ENCODE measurements at regions of chr1 and their contacts with region 1.

Region 1: GRCh38 chr1:145891587-145892485 is 6.2 kb upstream of the ANKRD35 start:
- DNase-seq: peak; percentile 74
- ATAC-seq: peak; percentile 78
- H3K4me3 Mint-ChIP-seq: no peak overlapping the region
- H3K27ac Mint-ChIP-seq: no peak overlapping the region
- H3K4me1 Mint-ChIP-seq: no peaks in the 10 kb centered on the region
- H3K27me3 Mint-ChIP-seq: no peaks in the 10 kb centered on the region

Region 2: GRCh38 chr1:145730900-145731299 is 160.9 kb before region 1 on chr1:
- CTCF ChIA-PET with region 1: no interaction called
- POLR2A ChIA-PET with region 1: no interaction called
- intact Hi-C with region 1: no loop called
- DNase-seq: no peak
- ATAC-seq: no peak
- H3K4me3 Mint-ChIP-seq: no peak overlapping the region
- H3K27ac Mint-ChIP-seq: no peak overlapping the region
- H3K4me1 Mint-ChIP-seq: no peaks in the 10 kb centered on the region
- H3K27me3 Mint-ChIP-seq: no peaks in the 10 kb centered on the region

Region 3: GRCh38 chr1:145751491-145752037 is 140.3 kb before region 1 on chr1:
- CTCF ChIA-PET with region 1: no interaction called
- POLR2A ChIA-PET with region 1: no interaction called
- intact Hi-C with region 1: no loop called
- DNase-seq: no peak
- ATAC-seq: no peak
- H3K4me3 Mint-ChIP-seq: no peak overlapping the region
- H3K27ac Mint-ChIP-seq: peak overlapping the region; percentile 28
- H3K4me1 Mint-ChIP-seq: peaks cover 8% of the 10 kb centered on the region
- H3K27me3 Mint-ChIP-seq: no peaks in the 10 kb centered on the region

Region 4: GRCh38 chr1:145879775-145880174 is 12.1 kb before region 1 on chr1:
- CTCF ChIA-PET with region 1: interaction called, 15 read pairs
- POLR2A ChIA-PET with region 1: no interaction called
- intact Hi-C with region 1: no loop called
- DNase-seq: no peak
- ATAC-seq: no peak
- H3K4me3 Mint-ChIP-seq: no peak overlapping the region
- H3K27ac Mint-ChIP-seq: no peak overlapping the region
- H3K4me1 Mint-ChIP-seq: peaks cover 4% of the 10 kb centered on the region
- H3K27me3 Mint-ChIP-seq: peaks cover 14% of the 10 kb centered on the region

Region 5: DNA sequence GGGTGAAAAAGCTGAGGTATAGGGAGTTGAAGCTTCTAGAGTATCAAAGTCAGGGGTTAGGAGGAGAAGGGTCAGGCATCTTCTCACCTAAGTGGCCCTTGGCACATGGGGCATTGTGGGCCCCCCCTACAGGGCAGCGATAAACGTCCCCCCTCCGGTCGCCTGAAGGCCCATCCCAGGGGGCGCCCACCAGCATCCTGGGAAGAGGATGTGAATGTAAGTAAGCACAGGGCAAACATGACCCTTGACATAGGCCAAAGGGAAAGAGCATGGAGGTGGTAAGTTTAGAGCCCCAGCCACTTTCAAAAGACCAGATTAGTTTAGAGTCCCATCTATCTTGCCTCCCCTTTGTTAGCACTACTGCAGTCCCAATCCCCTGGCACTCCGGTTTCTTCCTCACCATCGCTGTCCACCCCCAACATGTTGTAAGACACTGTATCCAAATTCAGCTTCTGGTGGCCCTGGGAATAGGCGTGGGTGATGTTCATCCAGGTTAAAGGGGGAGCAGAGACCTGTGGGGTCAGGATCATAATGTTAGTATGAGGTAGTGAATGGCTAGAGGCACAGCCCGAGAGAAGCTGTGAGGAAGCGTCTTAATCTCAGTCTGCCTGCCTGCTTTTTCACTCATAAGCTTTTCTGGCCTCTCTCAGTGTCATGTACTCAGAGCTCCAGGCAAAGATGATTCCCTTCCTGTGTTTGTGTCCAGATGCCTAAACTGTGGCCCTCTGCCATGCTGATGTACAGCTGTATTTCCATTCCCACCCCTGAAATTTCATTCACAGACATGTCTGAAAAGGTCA is 15.3 kb after region 1 on chr1:
- CTCF ChIA-PET with region 1: interaction called, 20 read pairs
- POLR2A ChIA-PET with region 1: no interaction called
- intact Hi-C with region 1: loop called in 1 of 2 experiments (anchors 2 kb)
- DNase-seq: no peak
- ATAC-seq: no peak
- H3K4me3 Mint-ChIP-seq: no peak overlapping the region
- H3K27ac Mint-ChIP-seq: no peak overlapping the region
- H3K4me1 Mint-ChIP-seq: no peaks in the 10 kb centered on the region
- H3K27me3 Mint-ChIP-seq: no peaks in the 10 kb centered on the region

Region 6: DNA sequence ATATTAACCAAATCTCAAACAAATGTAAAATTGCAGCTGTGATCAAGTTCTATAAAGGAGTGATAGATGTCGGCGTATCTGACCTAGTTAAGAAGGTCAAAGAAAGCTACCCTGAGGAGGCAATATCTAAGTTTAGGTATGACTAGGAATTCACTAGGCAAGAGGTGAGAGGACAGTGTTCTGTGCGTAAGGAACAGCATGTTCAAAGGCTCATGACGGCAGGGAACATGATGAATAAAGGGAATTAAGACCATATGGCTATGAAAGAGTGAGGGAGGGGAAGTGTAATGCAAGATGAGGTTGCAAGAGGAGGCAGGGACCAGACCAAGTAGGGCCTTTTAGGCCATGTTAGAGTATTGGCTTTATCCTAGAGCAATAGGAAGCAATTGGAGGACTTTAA is 57.4 kb after region 1 on chr1:
- CTCF ChIA-PET with region 1: no interaction called
- POLR2A ChIA-PET with region 1: no interaction called
- intact Hi-C with region 1: no loop called
- DNase-seq: no peak
- ATAC-seq: no peak
- H3K4me3 Mint-ChIP-seq: no peak overlapping the region
- H3K27ac Mint-ChIP-seq: peak overlapping the region; percentile 48
- H3K4me1 Mint-ChIP-seq: peaks cover 48% of the 10 kb centered on the region
- H3K27me3 Mint-ChIP-seq: no peaks in the 10 kb centered on the region

Region 7: GRCh38 chr1:146007506-146008133 is 115.8 kb after region 1 on chr1:
- CTCF ChIA-PET with region 1: interaction called, 6 read pairs
- POLR2A ChIA-PET with region 1: no interaction called
- intact Hi-C with region 1: loop called in 1 of 2 experiments (anchors 2 kb)
- DNase-seq: no peak
- ATAC-seq: no peak
- H3K4me3 Mint-ChIP-seq: peak overlapping the region; percentile 58
- H3K27ac Mint-ChIP-seq: peak overlapping the region; percentile 76
- H3K4me1 Mint-ChIP-seq: peaks cover 38% of the 10 kb centered on the region
- H3K27me3 Mint-ChIP-seq: no peaks in the 10 kb centered on the region

Region 8: GRCh38 chr1:146012737-146013403 is 121.0 kb after region 1 on chr1:
- CTCF ChIA-PET with region 1: interaction called, 9 read pairs
- POLR2A ChIA-PET with region 1: no interaction called
- intact Hi-C with region 1: loop called (anchors 1 to 2 kb)
- DNase-seq: peak; percentile 71
- ATAC-seq: peak; percentile 81
- H3K4me3 Mint-ChIP-seq: no peak overlapping the region
- H3K27ac Mint-ChIP-seq: peak overlapping the region; percentile 21
- H3K4me1 Mint-ChIP-seq: peaks cover 7% of the 10 kb centered on the region
- H3K27me3 Mint-ChIP-seq: peaks cover 5% of the 10 kb centered on the region

Measured in activated CD4-positive, alpha-beta T cell treated with anti-CD3 and anti-CD28 coated beads for 36 hours (primary cell).